AG04449 (cell line): ENCODE measurements at regions of chr17 and their contacts with region 1.

Region 1: GRCh38 chr17:17001874-17002520 is 30.1 kb upstream of the TNFRSF13B start:
- DNase-seq: no peak
- H3K4me3 ChIP-seq: no peak overlapping the region
- CTCF ChIP-seq: peak; percentile 92

Region 2: DNA sequence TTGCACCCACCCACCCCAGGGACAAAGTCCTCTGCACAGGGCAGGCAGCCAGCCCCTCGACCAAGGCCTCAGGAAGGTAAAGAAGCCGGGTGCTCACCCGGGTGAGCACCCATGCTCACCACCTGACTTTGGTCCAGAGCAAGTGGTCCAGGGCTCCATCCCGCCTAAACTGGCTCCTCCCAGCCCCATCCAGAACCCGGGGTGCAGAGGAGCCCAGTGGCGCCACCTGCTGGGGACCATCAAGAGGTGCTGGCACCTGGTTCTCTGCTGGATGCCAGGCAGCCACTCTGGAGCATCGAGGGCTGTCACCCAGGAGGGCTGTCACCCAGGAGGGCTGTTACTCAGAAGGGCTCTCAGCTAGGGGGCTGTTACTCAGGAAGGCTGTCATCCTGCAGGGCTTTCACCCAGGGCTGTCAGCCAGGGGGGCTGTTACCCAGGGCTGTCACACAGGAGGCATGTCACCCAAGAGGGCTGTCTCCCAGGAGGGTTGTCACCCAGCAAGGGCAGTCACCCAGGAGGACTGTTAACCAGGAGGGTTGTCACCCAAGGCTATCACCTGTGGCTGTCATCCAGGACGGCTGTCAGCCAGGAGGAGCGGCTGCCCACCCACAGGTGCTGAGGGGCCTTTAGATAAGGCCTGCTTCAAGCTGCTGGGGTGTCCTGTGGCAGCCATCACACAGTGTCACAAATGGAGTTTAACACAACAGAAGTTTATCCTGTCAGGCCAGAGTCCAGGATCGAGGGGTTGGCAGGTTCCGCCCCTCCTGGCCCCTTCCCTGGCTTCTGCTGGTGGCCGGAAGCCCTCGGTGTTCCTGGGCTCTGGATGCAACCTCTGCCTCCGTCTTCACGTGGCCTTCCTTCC is 128.6 kb before region 1 on chr17:
- CTCF ChIA-PET with region 1: no interaction called
- POLR2A ChIA-PET with region 1: no interaction called
- DNase-seq: no peak
- H3K4me3 ChIP-seq: no peak overlapping the region
- CTCF ChIP-seq: peak; percentile 52

Region 3: GRCh38 chr17:16962818-16963217 is 39.2 kb before region 1 on chr17:
- CTCF ChIA-PET with region 1: no interaction called
- POLR2A ChIA-PET with region 1: no interaction called
- DNase-seq: no peak
- H3K4me3 ChIP-seq: no peak overlapping the region
- CTCF ChIP-seq: no peak

Region 4: GRCh38 chr17:16991349-16992009 is 10.5 kb before region 1 on chr17:
- CTCF ChIA-PET with region 1: interaction called, 35 read pairs
- POLR2A ChIA-PET with region 1: no interaction called
- DNase-seq: no peak
- H3K4me3 ChIP-seq: no peak overlapping the region
- CTCF ChIP-seq: peak; percentile 85

Region 5: GRCh38 chr17:17141860-17142552 is 140.0 kb after region 1 on chr17:
- CTCF ChIA-PET with region 1: interaction called, 26 read pairs
- POLR2A ChIA-PET with region 1: no interaction called
- DNase-seq: no peak
- H3K4me3 ChIP-seq: no peak overlapping the region
- CTCF ChIP-seq: peak; percentile 84

Region 6: DNA sequence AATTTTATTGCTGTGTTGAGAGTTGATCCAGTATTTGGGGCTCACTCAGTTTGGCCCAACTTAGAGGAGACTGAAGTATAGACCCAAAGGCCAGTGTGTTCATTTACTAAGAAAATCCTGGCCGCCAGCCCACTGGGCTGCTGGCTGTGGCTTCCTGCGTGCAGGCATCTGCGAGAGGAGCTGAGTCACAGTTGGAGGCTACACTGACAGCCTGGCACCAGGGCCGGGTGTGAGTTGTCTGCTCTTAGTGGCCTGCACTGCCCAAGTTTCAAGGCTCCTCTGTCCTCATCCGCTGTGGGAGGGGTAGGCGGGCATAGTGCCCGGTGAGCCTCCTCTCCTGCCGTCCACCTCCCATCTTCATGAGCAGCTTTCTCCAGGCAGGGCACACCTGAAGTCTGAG is 150.0 kb after region 1 on chr17:
- CTCF ChIA-PET with region 1: interaction called, 15 read pairs
- POLR2A ChIA-PET with region 1: no interaction called
- DNase-seq: peak; percentile 78
- H3K4me3 ChIP-seq: no peak overlapping the region
- CTCF ChIP-seq: no peak

Region 7: DNA sequence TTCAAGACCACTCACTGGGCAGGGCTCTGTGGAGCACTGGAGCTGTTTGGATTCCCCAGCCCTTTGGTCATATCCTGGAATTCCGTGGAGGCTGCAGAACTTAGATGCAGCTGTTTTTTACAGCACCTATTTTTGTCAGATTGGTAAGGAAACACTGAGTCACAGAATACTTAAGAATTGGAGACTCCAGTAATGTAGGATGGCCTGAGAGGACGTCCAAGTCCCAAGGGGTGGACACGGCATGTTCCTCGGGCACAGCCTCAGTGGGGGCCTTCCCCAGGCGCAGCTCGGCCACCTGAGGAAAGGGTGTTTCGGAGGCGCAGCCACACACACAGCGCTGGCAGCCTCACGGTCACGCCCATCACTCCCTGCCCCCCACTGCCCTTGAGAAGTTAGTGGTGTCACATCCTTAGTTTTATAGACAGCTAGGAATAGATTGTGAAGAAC is 189.4 kb after region 1 on chr17:
- CTCF ChIA-PET with region 1: interaction called, 23 read pairs
- POLR2A ChIA-PET with region 1: no interaction called
- DNase-seq: peak; percentile 44
- H3K4me3 ChIP-seq: no peak overlapping the region; the same call in 1 of the 2 replicates
- CTCF ChIP-seq: no peak